Activated CD8-positive, alpha-beta memory T cell treated with anti-CD3 and anti-CD28 coated beads, Interleukin-2, amount 10 ng/mL, durations not matched to agents 7 days and 5 days (primary cell): ENCODE measurements at regions of chr19 and their contacts with region 1.

Region 1: DNA sequence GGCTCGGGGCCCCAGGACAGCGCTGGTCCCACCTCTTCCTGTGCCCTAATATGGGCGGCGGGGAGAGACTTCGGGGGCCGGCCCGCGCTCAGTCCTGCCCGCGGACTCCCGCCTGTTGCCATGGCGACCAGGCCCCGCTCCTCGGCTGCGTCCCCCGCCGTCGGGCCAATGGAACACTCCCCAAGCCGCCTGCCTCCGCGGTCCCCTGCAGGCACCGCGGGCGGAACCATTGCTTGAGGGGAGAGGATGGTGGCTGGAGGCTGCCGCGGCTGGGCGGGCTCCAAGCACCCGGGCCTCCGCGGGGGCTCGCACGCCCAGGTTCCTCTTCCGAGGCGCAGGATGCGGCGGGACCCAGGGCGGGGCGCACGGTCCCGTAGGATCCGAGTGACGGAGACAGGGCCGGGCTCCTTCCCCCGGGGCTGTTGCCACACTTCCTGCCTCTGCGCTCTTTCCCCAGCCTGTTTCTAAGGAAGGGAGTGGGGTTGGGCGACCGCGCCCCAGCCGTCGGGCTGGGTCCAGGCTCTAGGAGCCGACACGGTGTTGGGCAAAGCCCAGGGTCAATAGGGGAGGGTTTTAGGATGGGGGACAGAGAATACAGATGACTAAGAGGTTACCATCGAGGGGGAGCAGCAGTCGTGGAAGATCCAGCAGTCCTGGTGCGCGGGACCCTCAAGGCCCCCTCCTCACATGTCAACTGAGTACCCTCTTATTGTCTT is 1.2 kb upstream of the JUNB start:
- DNase-seq: peak; percentile 99
- ATAC-seq: peak; percentile 50
- H3K4me3 Mint-ChIP-seq: peak overlapping the region; percentile 93
- H3K27ac Mint-ChIP-seq: peak overlapping the region; percentile 95
- H3K4me1 Mint-ChIP-seq: peaks cover 37% of the 10 kb centered on the region
- H3K27me3 Mint-ChIP-seq: no peaks in the 10 kb centered on the region

Region 2: GRCh38 chr19:12777217-12778016 is 12.6 kb before region 1 on chr19:
- CTCF ChIA-PET with region 1: interaction called, 1,017 read pairs
- DNase-seq: peak; percentile 87
- ATAC-seq: peak; percentile 41
- H3K4me3 Mint-ChIP-seq: peak overlapping the region; percentile 76
- H3K27ac Mint-ChIP-seq: peak overlapping the region; percentile 97
- H3K4me1 Mint-ChIP-seq: peaks cover 37% of the 10 kb centered on the region
- H3K27me3 Mint-ChIP-seq: no peaks in the 10 kb centered on the region